CD4-positive, alpha-beta memory T cell (primary cell): ENCODE measurements at regions of chr3 and their contacts with region 1.

Region 1: GRCh38 chr3:125374996-125375941 is at the start of gene ZNF148:
- DNase-seq: peak; percentile 90 to 93 (median 92)
- H3K4me3 ChIP-seq: peak within 1 kb of the TSS; percentile 77 to 93
- H3K4me3 Mint-ChIP-seq: peak within 1 kb of the TSS; percentile 93 to 100 (median 97)
- H3K27ac ChIP-seq: peak within 1 kb of the TSS; percentile 94
- H3K27ac Mint-ChIP-seq: peak within 1 kb of the TSS; percentile 97 to 100 (median 98)
- H3K4me1 ChIP-seq: peaks cover 33% of the 10 kb centered on the region
- H3K4me1 Mint-ChIP-seq: peaks cover 28 to 53% (median 42%) of the 10 kb centered on the region in 4 donors
- H3K27me3 ChIP-seq: no peaks in the 10 kb centered on the region
- H3K27me3 Mint-ChIP-seq: no peaks in the 10 kb centered on the region
- total RNA-seq, gene ZNF148: 60.6 to 61.4 TPM

Region 2: DNA sequence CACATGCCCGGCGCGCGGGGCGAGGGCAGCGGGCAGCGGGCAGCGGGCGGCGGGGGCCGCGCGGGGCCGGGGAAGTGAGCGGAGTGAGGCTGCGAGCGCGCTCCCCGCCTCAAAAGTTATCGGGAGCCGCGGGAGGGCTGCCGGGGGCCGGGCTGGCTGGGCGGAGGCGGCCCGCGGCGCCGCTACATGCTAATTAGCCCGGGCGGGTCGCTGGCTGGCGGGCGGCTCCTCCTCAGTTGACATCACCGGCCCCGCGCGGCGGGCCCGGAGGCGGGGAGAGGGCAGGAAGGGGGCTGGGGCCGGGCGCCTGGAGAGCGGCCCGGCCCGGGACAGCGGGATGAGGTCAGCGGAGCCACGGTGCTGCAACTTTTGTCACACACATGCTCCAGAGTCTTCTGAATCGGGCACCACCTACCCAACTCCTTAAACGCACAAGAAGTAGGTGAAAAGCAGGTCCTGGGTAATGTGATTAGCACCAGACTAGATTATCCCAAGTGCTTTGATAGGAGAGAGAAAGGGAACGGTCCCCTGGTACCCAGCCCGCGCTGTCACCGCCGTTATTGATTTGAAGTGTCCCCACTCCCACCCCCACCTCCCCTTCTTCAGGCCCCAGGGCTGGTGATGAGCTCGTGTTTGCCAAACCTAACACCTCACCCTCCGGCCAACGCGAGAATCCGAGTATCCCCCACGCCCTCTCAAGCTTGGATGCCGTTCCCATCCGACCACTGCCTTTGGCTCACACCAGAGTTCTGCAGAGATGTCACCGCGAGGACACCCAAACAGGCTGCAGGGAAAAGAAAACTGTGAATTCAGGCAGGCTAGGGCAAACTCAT is 319.1 kb before region 1 on chr3 and contains the start of gene HEG1:
- CTCF ChIA-PET with region 1: interaction called, 3 read pairs
- POLR2A ChIA-PET with region 1: interaction called, 3 read pairs
- intact Hi-C with region 1: loop called (anchors 1 kb)
- DNase-seq: peak; percentile 71 to 80 (median 72)
- H3K4me3 ChIP-seq: peak within 1 kb of the TSS; percentile 60 to 75
- H3K4me3 Mint-ChIP-seq: peak within 1 kb of the TSS; percentile 92 to 99 (median 96)
- H3K27ac ChIP-seq: peak within 1 kb of the TSS; percentile 73
- H3K27ac Mint-ChIP-seq: peak within 1 kb of the TSS; percentile 95 to 99 (median 98)
- H3K4me1 ChIP-seq: peaks cover 41% of the 10 kb centered on the region
- H3K4me1 Mint-ChIP-seq: peaks cover 32 to 42% (median 38%) of the 10 kb centered on the region in 4 donors
- H3K27me3 ChIP-seq: no peaks in the 10 kb centered on the region
- H3K27me3 Mint-ChIP-seq: peaks cover 5 to 6% of the 10 kb centered on the region in 2 donors
- total RNA-seq, gene HEG1: 20.2 to 21.7 TPM

Region 3: GRCh38 chr3:125129512-125129962 is 245.7 kb before region 1 on chr3:
- CTCF ChIA-PET with region 1: no interaction called
- POLR2A ChIA-PET with region 1: no interaction called
- intact Hi-C with region 1: no loop called
- DNase-seq: no peak
- H3K4me3 ChIP-seq: no peak overlapping the region
- H3K4me3 Mint-ChIP-seq: no peak overlapping the region
- H3K27ac ChIP-seq: no peak overlapping the region
- H3K27ac Mint-ChIP-seq: no peak overlapping the region
- H3K4me1 ChIP-seq: peaks cover 9% of the 10 kb centered on the region
- H3K4me1 Mint-ChIP-seq: peaks cover 0 to 14% (median 8%) of the 10 kb centered on the region in 4 donors
- H3K27me3 ChIP-seq: no peaks in the 10 kb centered on the region
- H3K27me3 Mint-ChIP-seq: peaks cover 0 to 1% of the 10 kb centered on the region in 2 donors

Region 4: GRCh38 chr3:125310623-125311081 is 64.6 kb before region 1 on chr3:
- CTCF ChIA-PET with region 1: interaction called, 3 read pairs
- POLR2A ChIA-PET with region 1: interaction called, 11 read pairs
- intact Hi-C with region 1: loop called (anchors 2 kb)
- DNase-seq: peak; percentile 40 to 63 (median 46)
- H3K4me3 ChIP-seq: peak overlapping the region; percentile 37 to 60
- H3K4me3 Mint-ChIP-seq: peak overlapping the region; percentile 86 to 96 (median 92)
- H3K27ac ChIP-seq: peak overlapping the region; percentile 61
- H3K27ac Mint-ChIP-seq: peak overlapping the region; percentile 87 to 96 (median 94)
- H3K4me1 ChIP-seq: peaks cover 35% of the 10 kb centered on the region
- H3K4me1 Mint-ChIP-seq: peaks cover 32 to 57% (median 41%) of the 10 kb centered on the region in 4 donors
- H3K27me3 ChIP-seq: no peaks in the 10 kb centered on the region
- H3K27me3 Mint-ChIP-seq: no peaks in the 10 kb centered on the region

Region 5: DNA sequence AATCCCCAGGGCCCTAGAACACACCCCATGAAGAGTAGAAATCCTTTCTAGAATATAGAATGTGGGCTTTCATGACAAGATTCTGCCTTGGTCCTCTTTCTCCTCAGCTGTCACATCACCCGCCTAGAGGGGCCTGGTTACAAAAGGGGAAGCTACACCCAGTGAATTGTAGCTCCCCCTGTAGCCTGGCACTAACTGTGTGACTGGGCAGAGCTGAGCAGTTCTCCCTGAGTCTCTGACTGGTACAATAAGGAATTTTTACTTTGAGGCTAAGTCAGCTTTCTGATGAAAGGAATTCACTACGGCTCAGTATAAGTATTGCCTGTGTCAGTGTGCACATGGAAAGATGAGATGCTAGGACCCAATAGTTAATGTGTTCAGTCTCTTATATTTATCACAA is 28.5 kb after region 1 on chr3:
- CTCF ChIA-PET with region 1: no interaction called
- POLR2A ChIA-PET with region 1: no interaction called
- intact Hi-C with region 1: no loop called
- DNase-seq: no peak
- H3K4me3 ChIP-seq: no peak overlapping the region
- H3K4me3 Mint-ChIP-seq: no peak overlapping the region
- H3K27ac ChIP-seq: no peak overlapping the region
- H3K27ac Mint-ChIP-seq: no peak overlapping the region
- H3K4me1 ChIP-seq: no peaks in the 10 kb centered on the region
- H3K4me1 Mint-ChIP-seq: peaks cover 0 to 3% (median under 1%) of the 10 kb centered on the region in 4 donors
- H3K27me3 ChIP-seq: no peaks in the 10 kb centered on the region
- H3K27me3 Mint-ChIP-seq: peaks cover 2 to 9% of the 10 kb centered on the region in 2 donors

Region 6: DNA sequence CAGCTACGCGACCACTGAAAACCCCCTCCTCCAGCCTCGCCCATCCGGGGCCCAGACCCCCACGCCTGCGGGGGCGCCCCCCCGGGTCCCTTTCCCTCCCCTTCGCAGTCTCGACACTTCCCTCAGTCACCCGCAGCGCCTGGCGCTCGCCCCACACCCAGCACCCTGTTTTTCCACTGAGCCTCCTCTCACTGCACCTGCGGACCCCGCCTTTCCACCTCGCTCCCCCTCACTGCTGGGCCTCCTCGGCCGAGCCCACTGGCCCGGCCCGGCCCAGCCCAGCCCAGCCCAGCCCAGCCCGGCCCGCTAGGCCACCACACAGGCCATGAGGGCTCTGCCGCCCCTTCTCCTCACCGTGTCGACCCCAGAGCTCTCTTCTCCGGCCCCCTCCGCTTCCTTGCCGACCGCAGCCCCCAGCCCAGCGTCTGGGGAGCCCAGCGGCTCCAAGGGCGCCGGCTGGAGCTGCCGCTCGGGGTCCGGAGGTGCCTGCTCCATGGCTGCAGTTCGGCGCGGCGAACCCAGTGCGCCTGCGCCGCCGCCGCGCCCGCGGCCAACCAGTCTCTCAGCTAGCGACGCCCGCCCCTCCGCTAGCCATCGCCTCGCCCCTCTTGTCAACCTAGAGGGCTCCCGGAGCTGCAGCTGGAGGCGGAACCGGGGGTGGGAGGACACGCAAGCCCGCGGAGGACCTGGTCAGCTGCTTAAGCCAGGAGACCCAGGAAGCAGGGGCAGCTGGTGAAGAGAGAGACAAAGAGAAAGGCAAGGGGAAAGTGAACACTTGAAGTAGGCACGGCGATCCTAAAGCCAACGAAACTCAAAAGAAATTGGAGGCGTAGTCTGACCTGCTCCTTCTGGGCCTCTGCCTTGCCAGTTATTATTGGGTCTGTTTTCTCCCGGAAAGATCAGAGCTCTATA is 144.7 kb after region 1 on chr3 and contains the start of gene SNX4:
- CTCF ChIA-PET with region 1: no interaction called
- POLR2A ChIA-PET with region 1: interaction called, 8 read pairs
- intact Hi-C with region 1: loop called (anchors 5 kb)
- DNase-seq: peak; percentile 81 to 90 (median 83)
- H3K4me3 ChIP-seq: peak within 1 kb of the TSS; percentile 75 to 84
- H3K4me3 Mint-ChIP-seq: peak within 1 kb of the TSS; percentile 90 to 99 (median 96)
- H3K27ac ChIP-seq: peak within 1 kb of the TSS; percentile 66
- H3K27ac Mint-ChIP-seq: peak within 1 kb of the TSS; percentile 82 to 96 (median 95)
- H3K4me1 ChIP-seq: peaks cover 28% of the 10 kb centered on the region
- H3K4me1 Mint-ChIP-seq: peaks cover 21 to 42% (median 35%) of the 10 kb centered on the region in 4 donors
- H3K27me3 ChIP-seq: no peaks in the 10 kb centered on the region
- H3K27me3 Mint-ChIP-seq: no peaks in the 10 kb centered on the region
- total RNA-seq, gene SNX4: 23.0 to 23.6 TPM